ENCODE measurements at regions of chr19 and their contacts with region 1.

Region 1: DNA sequence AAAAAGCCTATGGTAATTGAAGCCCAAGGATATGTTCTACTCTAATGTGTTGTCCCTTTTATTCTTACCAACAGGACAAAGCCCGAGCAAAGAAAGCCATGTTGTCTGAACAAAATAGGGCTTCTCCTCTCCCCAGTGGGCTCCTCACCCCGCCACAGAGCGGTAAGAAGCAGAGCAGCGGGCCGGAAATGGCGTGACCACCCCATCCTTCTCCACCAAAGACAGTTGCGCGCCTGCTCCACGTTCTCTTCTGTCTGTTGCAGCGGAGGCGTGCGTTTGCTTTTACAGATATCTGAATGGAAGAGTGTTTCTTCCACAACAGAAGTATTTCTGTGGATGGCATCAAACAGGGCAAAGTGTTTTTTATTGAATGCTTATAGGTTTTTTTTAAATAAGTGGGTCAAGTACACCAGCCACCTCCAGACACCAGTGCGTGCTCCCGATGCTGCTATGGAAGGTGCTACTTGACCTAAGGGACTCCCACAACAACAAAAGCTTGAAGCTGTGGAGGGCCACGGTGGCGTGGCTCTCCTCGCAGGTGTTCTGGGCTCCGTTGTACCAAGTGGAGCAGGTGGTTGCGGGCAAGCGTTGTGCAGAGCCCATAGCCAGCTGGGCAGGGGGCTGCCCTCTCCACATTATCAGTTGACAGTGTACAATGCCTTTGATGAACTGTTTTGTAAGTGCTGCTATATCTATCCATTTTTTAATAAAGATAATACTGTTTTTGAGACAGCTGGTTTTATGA is 12.0 kb downstream of the CCNE1 start:
- DNase-seq: no peak
- H3K4me3 ChIP-seq: no peak overlapping the region
- H3K27ac ChIP-seq: no peak overlapping the region
- H3K4me1 ChIP-seq: no peaks in the 10 kb centered on the region
- H3K27me3 ChIP-seq: no peaks in the 10 kb centered on the region
- CTCF ChIP-seq: no peak

Region 2: DNA sequence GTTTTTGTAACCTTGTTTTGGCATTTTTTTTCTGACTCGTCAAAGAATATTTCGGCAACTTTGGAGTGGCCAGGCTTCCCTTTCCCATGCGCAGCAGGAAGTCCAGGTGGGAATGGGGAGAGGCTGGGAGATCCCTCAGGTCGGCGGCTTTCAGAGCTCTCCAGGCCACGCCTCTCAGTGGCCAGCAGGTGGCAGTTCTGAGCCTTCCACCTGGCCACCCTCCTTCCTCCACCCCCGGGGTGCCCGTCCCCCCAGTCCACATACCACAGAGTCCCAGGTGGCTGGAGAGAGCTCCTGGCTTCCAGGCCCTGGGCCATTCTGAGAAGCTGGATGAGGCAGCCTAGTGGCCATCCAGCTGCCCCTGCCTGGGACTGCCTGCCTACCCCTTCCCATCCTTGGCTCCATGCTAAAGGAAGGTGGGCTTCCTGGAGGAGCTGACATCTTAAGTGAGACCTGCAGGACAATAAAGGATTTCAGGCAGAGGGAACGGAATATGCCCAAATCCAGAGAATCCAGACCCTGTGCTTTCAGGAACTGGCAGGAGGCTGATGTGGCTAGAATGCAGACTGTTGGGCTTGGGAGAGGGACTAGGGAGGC is 34.3 kb after region 1 on chr19:
- CTCF ChIA-PET with region 1: interaction called, 21 read pairs
- POLR2A ChIA-PET with region 1: no interaction called
- intact Hi-C with region 1: no loop called
- DNase-seq: peak; percentile 22
- H3K4me3 ChIP-seq: no peak overlapping the region
- H3K27ac ChIP-seq: no peak overlapping the region
- H3K4me1 ChIP-seq: no peaks in the 10 kb centered on the region
- H3K27me3 ChIP-seq: no peaks in the 10 kb centered on the region
- CTCF ChIP-seq: peak; percentile 64